Activated naive CD4-positive, alpha-beta T cell treated with anti-CD3 and anti-CD28 coated beads for 36 hours (primary cell): ENCODE measurements at regions of chr15 and their contacts with region 1.

Region 1: DNA sequence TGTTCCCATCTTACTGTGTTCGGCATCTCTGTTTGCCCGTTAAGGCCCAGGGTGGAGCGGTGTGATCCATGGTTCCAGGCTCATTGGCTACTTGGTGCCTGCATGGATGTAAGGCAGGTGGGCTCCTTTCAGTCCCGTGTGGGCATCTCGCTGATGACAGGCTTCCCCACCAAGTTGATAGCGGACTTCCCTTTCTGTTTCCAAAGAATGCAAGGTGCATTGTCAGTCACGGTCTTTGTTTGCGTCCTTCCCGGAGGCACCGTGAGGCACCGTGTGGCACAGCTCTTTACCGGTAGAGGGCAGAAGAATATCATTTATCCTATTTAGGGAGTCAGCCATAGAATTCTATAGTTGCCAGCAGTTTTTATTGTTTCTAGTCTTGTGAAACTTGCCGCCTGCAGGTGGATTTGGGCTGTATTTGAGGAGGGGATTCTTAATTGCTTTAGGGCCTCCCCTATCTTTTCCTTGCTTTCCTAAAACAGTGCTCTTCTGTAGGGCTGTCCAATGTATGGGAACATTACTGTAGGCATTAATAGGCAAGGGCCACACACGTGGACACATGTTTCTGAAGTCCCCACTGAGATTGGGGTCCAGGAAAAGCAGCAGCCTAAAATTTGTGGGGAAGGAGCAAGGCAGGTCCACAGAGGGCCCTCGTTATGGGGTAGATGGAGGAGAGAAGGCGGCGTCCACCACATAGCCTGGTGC is 244.1 kb downstream of the SLCO3A1 start:
- DNase-seq: peak; percentile 74
- H3K4me3 Mint-ChIP-seq: no peak overlapping the region
- H3K27ac Mint-ChIP-seq: peak overlapping the region; percentile 42
- H3K4me1 Mint-ChIP-seq: peaks cover 39% of the 10 kb centered on the region
- H3K27me3 Mint-ChIP-seq: no peaks in the 10 kb centered on the region

Region 2: DNA sequence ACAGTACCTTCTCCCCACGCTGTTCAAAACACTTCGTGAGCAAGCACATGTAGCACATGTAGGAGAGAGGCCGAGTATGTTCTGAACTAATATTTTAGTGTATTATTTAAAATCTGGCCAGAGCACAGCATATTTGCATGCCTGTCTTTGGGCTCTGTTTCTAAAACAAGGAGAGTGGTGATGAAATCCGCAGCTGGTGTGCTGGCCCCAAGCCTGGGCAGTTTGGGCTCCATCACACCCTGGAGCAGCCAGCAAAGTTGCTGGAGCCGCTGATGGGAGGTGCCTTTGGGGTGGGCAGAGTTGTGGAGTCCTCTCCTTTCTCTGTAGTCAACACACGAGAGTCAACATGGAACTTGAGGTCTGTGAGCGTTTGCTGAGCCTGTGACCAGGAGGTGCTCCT is 127.5 kb before region 1 on chr15:
- CTCF ChIA-PET with region 1: no interaction called
- intact Hi-C with region 1: no loop called
- DNase-seq: no peak
- H3K4me3 Mint-ChIP-seq: no peak overlapping the region
- H3K27ac Mint-ChIP-seq: no peak overlapping the region
- H3K4me1 Mint-ChIP-seq: peaks cover 14% of the 10 kb centered on the region
- H3K27me3 Mint-ChIP-seq: no peaks in the 10 kb centered on the region

Region 3: DNA sequence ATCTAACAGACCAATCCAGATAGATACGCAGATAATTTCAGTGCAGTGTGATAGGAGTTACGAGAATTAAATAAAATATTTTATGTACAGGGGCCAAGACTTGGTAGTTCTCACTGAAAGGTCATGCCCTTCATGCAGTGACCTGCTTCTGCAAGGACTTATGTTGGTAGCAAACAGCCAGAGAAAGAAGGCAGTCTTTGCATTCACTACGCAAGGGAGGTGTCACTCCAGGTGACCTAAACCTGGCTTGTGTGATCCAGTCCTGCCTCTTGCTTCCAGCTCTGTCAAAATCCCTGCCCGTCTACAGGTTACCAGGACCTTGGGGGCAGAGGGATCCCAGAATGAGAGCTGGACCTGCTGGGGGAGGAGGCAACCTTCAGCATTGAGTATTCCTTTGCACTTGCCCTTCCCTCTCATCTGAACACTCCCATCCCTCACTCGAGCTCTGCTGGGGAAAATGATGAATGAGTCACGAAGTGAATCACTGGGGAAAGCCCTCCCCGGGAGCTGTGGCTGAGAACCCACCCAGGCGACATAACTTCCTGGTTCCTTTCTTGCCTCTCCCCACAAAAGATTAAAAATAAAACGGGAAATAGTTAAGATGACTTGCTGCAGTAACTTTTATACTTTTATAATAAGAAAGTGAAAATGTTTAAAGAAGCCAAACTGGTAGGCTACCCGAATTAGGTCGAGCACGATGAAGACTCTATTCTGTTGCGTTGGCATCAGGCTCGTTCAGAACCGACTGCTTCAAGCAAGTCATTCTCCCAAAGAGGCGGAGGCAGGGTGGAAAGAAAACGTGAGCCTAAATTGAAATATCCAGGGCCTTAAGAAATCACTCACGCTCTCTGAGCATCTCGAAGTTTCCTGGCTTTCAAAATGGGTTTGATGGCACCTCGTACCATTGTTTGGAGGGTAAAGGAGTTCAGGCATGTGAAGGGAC is 28.0 kb before region 1 on chr15:
- CTCF ChIA-PET with region 1: no interaction called
- intact Hi-C with region 1: no loop called
- DNase-seq: peak; percentile 78
- H3K4me3 Mint-ChIP-seq: peak overlapping the region; percentile 52
- H3K27ac Mint-ChIP-seq: peak overlapping the region; percentile 73
- H3K4me1 Mint-ChIP-seq: peaks cover 47% of the 10 kb centered on the region
- H3K27me3 Mint-ChIP-seq: no peaks in the 10 kb centered on the region

Region 4: GRCh38 chr15:92158434-92158833 is 60.8 kb after region 1 on chr15:
- CTCF ChIA-PET with region 1: interaction called, 3 read pairs
- intact Hi-C with region 1: loop called (anchors 2 kb)
- DNase-seq: peak; percentile 83
- H3K4me3 Mint-ChIP-seq: no peak overlapping the region
- H3K27ac Mint-ChIP-seq: no peak overlapping the region
- H3K4me1 Mint-ChIP-seq: peaks cover 26% of the 10 kb centered on the region
- H3K27me3 Mint-ChIP-seq: no peaks in the 10 kb centered on the region

Region 5: GRCh38 chr15:92226014-92226612 is 128.5 kb after region 1 on chr15:
- CTCF ChIA-PET with region 1: interaction called, 4 read pairs
- intact Hi-C with region 1: loop called (anchors 1 kb)
- DNase-seq: peak; percentile 7
- H3K4me3 Mint-ChIP-seq: no peak overlapping the region
- H3K27ac Mint-ChIP-seq: no peak overlapping the region
- H3K4me1 Mint-ChIP-seq: no peaks in the 10 kb centered on the region
- H3K27me3 Mint-ChIP-seq: peaks cover 6% of the 10 kb centered on the region

Region 6: DNA sequence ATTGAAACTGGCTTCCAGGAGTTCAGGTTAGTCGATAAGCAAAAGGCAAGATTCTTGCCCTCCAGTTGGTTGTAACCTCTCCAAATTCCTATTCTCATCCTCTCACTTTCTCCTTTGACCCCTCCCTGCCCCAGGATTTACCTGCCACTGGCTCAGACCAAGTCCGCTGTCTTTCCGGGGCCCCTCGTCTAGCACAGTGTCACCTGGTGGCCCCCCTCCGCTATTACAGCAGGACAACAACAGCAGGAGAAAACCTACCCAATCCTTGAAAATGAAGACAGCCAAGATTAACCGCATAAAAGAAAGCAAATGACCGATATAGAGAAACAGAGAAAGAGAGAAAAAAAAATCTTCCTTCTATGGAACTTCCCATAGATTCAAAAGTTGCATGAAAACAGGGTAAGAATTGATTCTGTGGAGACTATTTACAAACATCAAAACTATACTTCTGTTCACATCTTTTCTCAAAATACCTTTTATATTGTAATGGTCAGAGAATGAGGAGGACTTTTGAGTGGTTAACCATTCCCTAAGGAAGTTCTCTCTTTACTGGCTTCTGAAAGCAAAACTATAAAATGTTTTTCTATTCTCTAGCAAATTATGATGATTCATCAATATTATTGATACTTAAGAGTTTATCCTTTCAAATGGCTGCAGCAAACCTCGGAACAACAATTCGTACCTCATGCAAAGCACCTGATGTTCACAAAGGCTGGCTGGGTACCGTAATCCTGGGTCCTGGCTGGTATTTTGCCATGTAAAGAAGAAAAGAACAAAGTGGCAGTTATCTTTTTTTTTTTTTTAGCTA is 286.1 kb after region 1 on chr15:
- CTCF ChIA-PET with region 1: interaction called, 3 read pairs
- intact Hi-C with region 1: loop called (anchors 1 kb)
- DNase-seq: peak; percentile 54
- H3K4me3 Mint-ChIP-seq: no peak overlapping the region
- H3K27ac Mint-ChIP-seq: no peak overlapping the region
- H3K4me1 Mint-ChIP-seq: no peaks in the 10 kb centered on the region
- H3K27me3 Mint-ChIP-seq: peaks cover 28% of the 10 kb centered on the region

Region 7: DNA sequence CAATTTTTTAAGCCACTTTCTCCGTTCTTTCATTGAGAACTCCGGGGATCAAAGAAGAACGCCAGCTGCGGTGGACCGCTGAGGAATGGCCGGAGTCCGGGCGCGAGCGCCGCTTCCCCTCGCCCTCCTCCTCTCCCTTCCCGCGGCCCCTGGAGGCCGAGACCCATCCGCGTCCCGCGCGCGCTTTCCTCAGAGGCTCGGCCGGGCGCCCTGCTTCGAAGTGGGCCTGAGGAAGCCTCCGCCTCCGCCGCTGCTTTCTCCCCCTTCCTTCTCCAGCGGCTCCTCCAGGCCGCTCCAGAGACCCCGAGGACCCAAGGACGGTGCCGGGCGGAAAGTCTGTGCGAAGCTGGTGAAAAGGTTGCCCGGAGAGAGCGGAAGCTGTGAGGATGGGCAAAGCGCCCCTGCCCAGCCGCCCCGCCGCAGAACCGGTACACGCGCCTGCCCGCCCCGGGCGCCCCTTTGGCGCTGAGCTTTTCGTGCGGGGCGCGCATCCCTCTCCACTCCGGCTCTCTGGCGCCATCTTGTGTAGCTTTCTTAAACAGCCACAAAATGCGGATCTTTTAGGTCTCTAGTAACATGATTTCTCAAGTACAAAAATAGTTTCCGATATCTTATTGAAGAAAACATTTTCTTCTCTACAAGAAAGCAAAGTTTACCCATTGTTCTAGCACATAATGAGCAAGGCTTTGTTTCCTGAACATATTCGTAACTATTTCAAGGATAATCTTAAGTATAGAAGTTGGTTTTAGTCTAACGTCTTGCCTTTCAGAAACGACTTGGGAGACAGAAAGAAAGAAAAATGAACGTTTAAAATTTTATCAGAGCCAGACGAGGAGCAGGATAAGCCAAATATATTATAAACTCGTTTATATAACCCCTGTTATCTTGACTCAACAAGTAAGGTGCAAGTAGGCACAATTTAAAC is 617.1 kb after region 1 on chr15:
- CTCF ChIA-PET with region 1: interaction called, 9 read pairs
- intact Hi-C with region 1: loop called (anchors 1 kb)
- DNase-seq: peak; percentile 84
- H3K4me3 Mint-ChIP-seq: peak overlapping the region; percentile 46
- H3K27ac Mint-ChIP-seq: no peak overlapping the region
- H3K4me1 Mint-ChIP-seq: peaks cover 3% of the 10 kb centered on the region
- H3K27me3 Mint-ChIP-seq: peaks cover 4% of the 10 kb centered on the region